Activated CD4-positive, alpha-beta T cell treated with anti-CD3 and anti-CD28 coated beads for 36 hours (primary cell): ENCODE measurements at regions of chr15 and their contacts with region 1.

Region 1: GRCh38 chr15:43105778-43106485 is at the start of gene UBR1:
- DNase-seq: peak; percentile 95
- ATAC-seq: peak; percentile 94
- H3K4me3 Mint-ChIP-seq: peak within 1 kb of the TSS; percentile 93
- H3K27ac Mint-ChIP-seq: peak within 1 kb of the TSS; percentile 96
- H3K4me1 Mint-ChIP-seq: peaks cover 41% of the 10 kb centered on the region
- H3K27me3 Mint-ChIP-seq: no peaks in the 10 kb centered on the region
- total RNA-seq, gene UBR1: 26.8 to 30.6 TPM

Region 2: GRCh38 chr15:42736793-42737528 is 369.0 kb before region 1 on chr15 and contains the start of gene CDAN1:
- CTCF ChIA-PET with region 1: interaction called, 3 read pairs
- POLR2A ChIA-PET with region 1: no interaction called
- intact Hi-C with region 1: loop called in 1 of 2 experiments (anchors 1 kb)
- DNase-seq: peak; percentile 96
- ATAC-seq: peak; percentile 94
- H3K4me3 Mint-ChIP-seq: peak within 1 kb of the TSS; percentile 76
- H3K27ac Mint-ChIP-seq: peak within 1 kb of the TSS; percentile 61
- H3K4me1 Mint-ChIP-seq: peaks cover 16% of the 10 kb centered on the region
- H3K27me3 Mint-ChIP-seq: no peaks in the 10 kb centered on the region
- total RNA-seq, gene CDAN1: 12.9 to 16.6 TPM

Region 3: GRCh38 chr15:43067717-43068461 is 38.0 kb before region 1 on chr15:
- CTCF ChIA-PET with region 1: no interaction called
- POLR2A ChIA-PET with region 1: no interaction called
- intact Hi-C with region 1: no loop called
- DNase-seq: peak; percentile 47
- ATAC-seq: peak; percentile 95
- H3K4me3 Mint-ChIP-seq: no peak overlapping the region
- H3K27ac Mint-ChIP-seq: no peak overlapping the region
- H3K4me1 Mint-ChIP-seq: peaks cover 6% of the 10 kb centered on the region
- H3K27me3 Mint-ChIP-seq: no peaks in the 10 kb centered on the region

Region 4: GRCh38 chr15:43127752-43128151 is 21.8 kb after region 1 on chr15:
- CTCF ChIA-PET with region 1: interaction called, 3 read pairs
- POLR2A ChIA-PET with region 1: no interaction called
- intact Hi-C with region 1: loop called (anchors 1 to 2 kb)
- DNase-seq: no peak
- ATAC-seq: no peak
- H3K4me3 Mint-ChIP-seq: no peak overlapping the region
- H3K27ac Mint-ChIP-seq: no peak overlapping the region
- H3K4me1 Mint-ChIP-seq: peaks cover 9% of the 10 kb centered on the region
- H3K27me3 Mint-ChIP-seq: peaks cover 1% of the 10 kb centered on the region

Region 5: GRCh38 chr15:43329960-43330779 is 224.2 kb after region 1 on chr15 and contains the start of gene LCMT2:
- CTCF ChIA-PET with region 1: no interaction called
- POLR2A ChIA-PET with region 1: no interaction called
- intact Hi-C with region 1: loop called in 1 of 2 experiments (anchors 1 kb)
- DNase-seq: peak; percentile 93
- ATAC-seq: peak; percentile 91
- H3K4me3 Mint-ChIP-seq: peak within 1 kb of the TSS; percentile 91
- H3K27ac Mint-ChIP-seq: peak within 1 kb of the TSS; percentile 95
- H3K4me1 Mint-ChIP-seq: peaks cover 32% of the 10 kb centered on the region
- H3K27me3 Mint-ChIP-seq: no peaks in the 10 kb centered on the region
- total RNA-seq, gene LCMT2: 7.6 to 8.5 TPM

Region 6: DNA sequence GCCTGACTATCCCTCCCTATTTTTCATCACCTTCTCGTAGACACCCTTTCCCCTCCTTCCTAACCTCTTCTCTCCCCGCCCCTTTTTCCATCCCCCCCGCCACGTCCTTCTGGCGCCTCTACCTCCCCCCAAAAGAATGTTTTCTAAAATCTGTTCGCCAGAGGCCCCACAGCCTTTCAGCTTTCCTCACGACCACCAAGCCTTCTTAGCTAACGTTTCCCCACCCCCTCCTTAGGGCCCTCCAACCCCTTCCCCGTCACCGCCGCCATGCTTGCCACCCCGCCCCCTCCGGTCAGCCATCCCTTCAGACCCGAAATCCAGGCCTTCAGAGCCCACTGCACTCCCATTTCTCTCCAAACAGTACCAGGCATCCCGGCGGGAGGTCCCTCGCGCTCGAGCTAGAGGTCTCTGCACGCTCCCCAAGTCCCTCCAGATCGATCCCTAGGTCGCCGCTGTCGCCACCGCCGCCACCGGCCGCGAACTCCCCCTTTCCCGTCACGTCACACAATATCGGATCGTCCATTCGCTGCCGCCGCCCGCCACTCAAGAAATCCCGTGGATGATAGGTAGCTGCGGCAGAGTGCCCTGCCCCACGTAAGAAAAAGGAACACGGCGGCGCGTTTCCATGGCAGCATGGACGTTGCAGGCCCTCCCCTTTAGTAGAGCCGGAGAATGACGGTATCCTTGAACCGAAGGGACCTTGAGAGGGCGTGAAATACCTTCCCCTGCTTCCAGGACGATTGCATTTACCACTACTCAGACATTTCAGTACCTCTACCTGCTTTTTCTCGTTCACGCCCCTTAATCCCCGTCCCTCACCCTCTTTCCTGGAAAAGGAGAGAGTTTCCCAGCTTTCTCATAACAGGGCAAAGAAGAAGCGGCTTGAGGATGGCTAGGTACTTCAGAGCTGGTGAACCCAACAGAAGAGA is 387.0 kb after region 1 on chr15 and contains the start of gene TP53BP1:
- CTCF ChIA-PET with region 1: no interaction called
- POLR2A ChIA-PET with region 1: no interaction called
- intact Hi-C with region 1: loop called in 1 of 2 experiments (anchors 2 kb)
- DNase-seq: peak; percentile 98
- ATAC-seq: peak; percentile 100
- H3K4me3 Mint-ChIP-seq: peak within 1 kb of the TSS; percentile 81
- H3K27ac Mint-ChIP-seq: peak within 1 kb of the TSS; percentile 93
- H3K4me1 Mint-ChIP-seq: peaks cover 30% of the 10 kb centered on the region
- H3K27me3 Mint-ChIP-seq: no peaks in the 10 kb centered on the region
- total RNA-seq, gene TP53BP1: 22.4 to 23.9 TPM